HEK293 (cell line): ENCODE measurements at regions of chr6 and their contacts with region 1.

Region 1: DNA sequence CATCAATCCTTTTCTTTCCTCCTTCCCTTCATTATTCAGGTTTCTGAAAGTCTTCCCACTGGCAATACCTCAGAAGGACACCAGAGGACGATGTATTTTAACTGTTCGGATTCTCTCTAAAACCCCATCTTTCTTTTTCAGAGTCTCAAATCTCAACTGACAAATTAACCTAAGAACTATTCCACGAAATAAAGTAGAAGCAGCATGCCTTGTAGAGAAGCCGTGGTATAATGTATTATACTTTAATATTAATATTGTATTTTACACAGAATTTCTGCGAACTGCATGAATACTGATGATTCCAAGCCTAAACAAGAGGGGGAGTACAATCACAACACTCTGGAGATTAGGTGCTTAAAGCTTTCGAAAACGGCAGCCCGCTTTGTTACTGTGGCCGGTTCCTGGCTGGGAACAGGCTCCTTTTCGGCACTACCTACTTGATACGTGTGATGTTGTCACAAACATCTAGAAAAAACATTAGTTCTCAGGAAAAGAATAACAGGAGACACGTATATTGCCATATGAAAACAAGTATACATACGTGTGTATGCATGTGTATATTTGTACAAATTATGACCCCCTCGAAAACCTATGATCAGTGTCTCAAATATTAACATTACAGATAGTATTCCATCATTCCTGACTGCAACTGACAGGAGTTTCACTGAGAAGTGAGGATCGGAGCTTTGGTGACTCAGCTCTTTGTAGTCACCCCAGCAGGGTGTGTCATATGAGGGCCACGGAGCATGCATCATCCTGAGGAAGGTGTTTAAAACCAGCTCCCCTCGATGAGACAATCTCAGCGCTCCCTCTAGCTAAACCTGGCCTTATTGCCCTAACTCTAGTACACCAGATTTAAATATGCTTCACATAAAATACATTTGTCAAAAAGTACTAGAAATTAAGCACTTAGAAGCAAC is 319.7 kb upstream of the TCF21 start:
- H3K4me3 ChIP-seq: peak overlapping the region; percentile 49
- H3K27ac ChIP-seq: no peak overlapping the region; the same call in 1 of the 2 replicates
- H3K4me1 ChIP-seq: no peaks in the 10 kb centered on the region
- CTCF ChIP-seq: peak; percentile 79

Region 2: GRCh38 chr6:133551847-133552341 is 17.3 kb before region 1 on chr6:
- CTCF ChIA-PET with region 1: interaction called, 10 read pairs
- POLR2A ChIA-PET with region 1: no interaction called
- H3K4me3 ChIP-seq: no peak overlapping the region
- H3K27ac ChIP-seq: no peak overlapping the region
- H3K4me1 ChIP-seq: no peaks in the 10 kb centered on the region
- CTCF ChIP-seq: no peak

Region 3: GRCh38 chr6:133837801-133838349 is 268.6 kb after region 1 on chr6:
- CTCF ChIA-PET with region 1: interaction called, 33 read pairs
- POLR2A ChIA-PET with region 1: interaction called, 3 read pairs
- H3K4me3 ChIP-seq: peak overlapping the region; percentile 57
- H3K27ac ChIP-seq: peak overlapping the region; percentile 36; the same call in 1 of the 2 replicates
- H3K4me1 ChIP-seq: no peaks in the 10 kb centered on the region
- CTCF ChIP-seq: peak; percentile 96

Region 4: GRCh38 chr6:133906050-133906449 is 336.8 kb after region 1 on chr6:
- CTCF ChIA-PET with region 1: interaction called, 18 read pairs
- POLR2A ChIA-PET with region 1: no interaction called
- H3K4me3 ChIP-seq: no peak overlapping the region
- H3K27ac ChIP-seq: no peak overlapping the region
- H3K4me1 ChIP-seq: no peaks in the 10 kb centered on the region
- CTCF ChIP-seq: no peak